ENCODE measurements at regions of chr10 and their contacts with region 1.

Region 1: DNA sequence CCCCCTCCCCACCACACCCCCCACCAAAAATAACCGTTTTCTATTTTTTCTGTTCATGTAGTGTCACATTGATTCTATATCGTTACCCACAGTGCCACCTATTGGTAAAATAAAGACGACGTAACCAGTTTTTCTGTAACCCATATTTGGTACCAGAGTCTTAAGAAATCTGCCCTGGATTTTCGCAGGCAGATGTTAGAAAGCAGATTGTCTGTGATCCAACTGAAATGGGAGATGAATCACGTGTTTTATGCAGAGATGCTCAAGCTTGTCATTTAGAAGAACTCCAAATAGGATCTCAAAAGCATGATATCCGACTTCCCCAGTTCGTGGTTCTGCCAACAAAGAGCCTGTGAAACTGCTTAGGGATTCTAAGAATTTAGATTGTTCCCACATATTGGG is 261.1 kb upstream of the CSTF2T start:
- DNase-seq: peak in 2 of 9 experiments; percentile 26 to 40
- ATAC-seq: no peak
- H3K4me3 ChIP-seq: no peak overlapping the region
- H3K4me3 Mint-ChIP-seq: no peak overlapping the region
- H3K27ac ChIP-seq: no peak overlapping the region
- H3K27ac Mint-ChIP-seq: no peak overlapping the region
- H3K4me1 ChIP-seq: no peaks in the 10 kb centered on the region
- H3K4me1 Mint-ChIP-seq: no peaks in the 10 kb centered on the region
- H3K27me3 ChIP-seq: no peaks in the 10 kb centered on the region
- H3K27me3 Mint-ChIP-seq: peaks cover 3% of the 10 kb centered on the region
- CTCF ChIP-seq: peak; percentile 64

Region 2: GRCh38 chr10:51001587-51001986 is 958.9 kb before region 1 on chr10:
- CTCF ChIA-PET with region 1: interaction called, 3 read pairs
- POLR2A ChIA-PET with region 1: no interaction called
- intact Hi-C with region 1: loop called (anchors 2 kb)
- DNase-seq: peak in 2 of 9 experiments; percentile 21 to 24
- ATAC-seq: no peak
- H3K4me3 ChIP-seq: no peak overlapping the region
- H3K4me3 Mint-ChIP-seq: no peak overlapping the region
- H3K27ac ChIP-seq: no peak overlapping the region
- H3K27ac Mint-ChIP-seq: no peak overlapping the region
- H3K4me1 ChIP-seq: no peaks in the 10 kb centered on the region
- H3K4me1 Mint-ChIP-seq: no peaks in the 10 kb centered on the region
- H3K27me3 ChIP-seq: no peaks in the 10 kb centered on the region
- H3K27me3 Mint-ChIP-seq: peaks cover 6% of the 10 kb centered on the region
- CTCF ChIP-seq: peak; percentile 53

Region 3: GRCh38 chr10:51010977-51011376 is 949.5 kb before region 1 on chr10:
- CTCF ChIA-PET with region 1: interaction called, 3 read pairs
- POLR2A ChIA-PET with region 1: no interaction called
- intact Hi-C with region 1: loop called (anchors 2 kb)
- DNase-seq: peak in 3 of 9 experiments; percentile 8 to 53 (median 40)
- ATAC-seq: no peak
- H3K4me3 ChIP-seq: no peak overlapping the region
- H3K4me3 Mint-ChIP-seq: no peak overlapping the region
- H3K27ac ChIP-seq: no peak overlapping the region
- H3K27ac Mint-ChIP-seq: no peak overlapping the region
- H3K4me1 ChIP-seq: no peaks in the 10 kb centered on the region
- H3K4me1 Mint-ChIP-seq: peaks cover 2% of the 10 kb centered on the region
- H3K27me3 ChIP-seq: no peaks in the 10 kb centered on the region
- H3K27me3 Mint-ChIP-seq: peaks cover 18% of the 10 kb centered on the region
- CTCF ChIP-seq: peak; percentile 64

Region 4: GRCh38 chr10:51389415-51390321 is 570.8 kb before region 1 on chr10:
- CTCF ChIA-PET with region 1: interaction called, 10 read pairs
- POLR2A ChIA-PET with region 1: no interaction called
- intact Hi-C with region 1: loop called in 1 of 2 experiments (anchors 2 kb)
- DNase-seq: peak in 6 of 9 experiments; percentile 19 to 50 (median 34)
- ATAC-seq: no peak
- H3K4me3 ChIP-seq: no peak overlapping the region
- H3K4me3 Mint-ChIP-seq: no peak overlapping the region
- H3K27ac ChIP-seq: no peak overlapping the region
- H3K27ac Mint-ChIP-seq: no peak overlapping the region
- H3K4me1 ChIP-seq: no peaks in the 10 kb centered on the region
- H3K4me1 Mint-ChIP-seq: no peaks in the 10 kb centered on the region
- H3K27me3 ChIP-seq: no peaks in the 10 kb centered on the region
- H3K27me3 Mint-ChIP-seq: no peaks in the 10 kb centered on the region
- CTCF ChIP-seq: peak; percentile 47

Measured in CD8-positive, alpha-beta T cell (primary cell).